ENCODE measurements at regions of chr17 and their contacts with region 1.

Region 1: DNA sequence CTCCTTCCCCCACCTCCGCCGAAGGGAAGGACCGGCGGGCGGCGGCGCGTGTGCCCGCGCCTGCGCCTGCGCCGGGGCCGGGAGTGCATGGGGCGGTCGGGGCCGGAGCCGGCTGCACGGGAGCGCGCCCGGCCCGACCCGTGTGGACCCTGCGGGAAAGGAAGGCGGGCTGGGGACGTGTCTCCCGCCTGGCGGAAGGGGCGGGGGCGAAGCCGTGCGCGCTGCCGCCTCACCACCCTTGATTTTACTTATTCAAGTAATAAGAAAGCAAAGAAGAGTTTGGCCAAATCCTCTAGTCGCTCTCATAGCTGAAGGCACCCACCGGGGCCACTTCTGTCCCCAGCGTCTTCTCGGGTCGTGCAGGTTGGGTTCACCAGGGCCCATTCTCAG is 596 bp upstream of the PFN1 start:
- DNase-seq: peak; percentile 51 to 87 (median 64)
- H3K4me3 ChIP-seq: peak overlapping the region; percentile 68 to 98 (median 91)
- H3K27ac ChIP-seq: peak overlapping the region; percentile 76 to 98 (median 96)
- H3K27me3 ChIP-seq: peaks cover 0 to 3% (median 0%) of the 10 kb centered on the region in 45 donors
- CTCF ChIP-seq: peak in 1 of 56 donors; percentile 4

Region 2: GRCh38 chr17:4891411-4892342 is 57.2 kb before region 1 on chr17:
- intact Hi-C with region 1: no loop called
- DNase-seq: no peak
- H3K4me3 ChIP-seq: no peak overlapping the region
- H3K27ac ChIP-seq: no peak overlapping the region
- H3K27me3 ChIP-seq: no peaks in the 10 kb centered on the region
- CTCF ChIP-seq: no peak

Region 3: GRCh38 chr17:4903051-4903818 is 45.7 kb before region 1 on chr17 and contains the start of gene CHRNE:
- intact Hi-C with region 1: loop called in 1 of 2 experiments (anchors 5 kb)
- DNase-seq: peak in 8 of 10 donors; percentile 60 to 90 (median 78)
- H3K4me3 ChIP-seq: peak within 1 kb of the TSS in 27 of 59 donors; percentile 1 to 64 (median 36)
- H3K27ac ChIP-seq: peak within 1 kb of the TSS in 57 of 59 donors; percentile 33 to 94 (median 77)
- H3K27me3 ChIP-seq: no peaks in the 10 kb centered on the region
- CTCF ChIP-seq: peak; percentile 65 to 89 (median 80)
- total RNA-seq, gene CHRNE: 0.34 to 4.3 (median 1.1) TPM in 119 of 120 experiments, not detected in the other

Region 4: DNA sequence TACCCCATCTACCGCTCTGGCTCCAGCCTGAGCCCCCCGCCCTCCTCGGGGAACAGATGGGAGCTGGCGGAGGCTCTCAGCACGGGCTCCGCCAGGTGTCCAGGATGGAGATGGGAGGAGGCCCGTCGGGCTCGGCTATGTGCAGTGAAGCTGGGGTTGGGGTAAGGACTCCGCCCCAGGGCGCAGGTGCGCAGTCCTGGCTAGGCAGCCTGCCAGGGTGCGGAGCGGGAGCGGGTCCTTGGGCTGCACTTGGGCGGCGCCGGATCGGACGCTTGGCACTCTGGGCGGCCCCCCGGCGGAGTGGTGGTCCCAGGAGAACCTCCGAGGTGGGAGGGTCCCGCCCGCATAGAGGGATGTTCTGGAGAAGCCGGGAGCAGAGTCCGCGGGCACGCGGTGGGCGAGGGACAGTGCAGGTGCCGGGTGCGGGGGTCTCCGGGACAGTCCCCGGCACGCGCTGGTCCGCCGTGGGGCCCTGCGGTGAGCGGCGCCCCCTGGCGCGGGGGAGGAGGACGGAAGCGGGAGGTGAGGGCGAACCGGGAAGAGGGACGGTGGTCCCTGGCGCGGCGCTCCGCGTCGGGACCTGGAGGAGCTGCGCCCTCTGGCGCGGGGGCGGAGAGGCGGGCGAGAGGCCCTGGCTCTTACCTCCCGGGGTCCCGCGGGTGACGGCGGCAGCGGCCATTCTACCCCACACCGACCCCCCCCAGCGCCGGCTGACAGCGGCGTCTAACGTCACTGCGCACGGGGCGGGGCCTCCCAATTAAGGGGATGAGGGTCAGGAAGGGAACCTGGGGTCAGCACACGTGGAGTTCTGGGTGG is 38.2 kb after region 1 on chr17 and contains the start of gene CAMTA2:
- intact Hi-C with region 1: loop called in 1 of 2 experiments (anchors 5 kb)
- DNase-seq: peak; percentile 77 to 93 (median 90)
- H3K4me3 ChIP-seq: peak within 1 kb of the TSS; percentile 64 to 100 (median 96)
- H3K27ac ChIP-seq: peak within 1 kb of the TSS; percentile 68 to 98 (median 93)
- H3K27me3 ChIP-seq: no peaks in the 10 kb centered on the region
- CTCF ChIP-seq: peak in 55 of 56 donors; percentile 41 to 82 (median 68)
- total RNA-seq, gene CAMTA2: 79.4 to 186 (median 143) TPM

Region 5: DNA sequence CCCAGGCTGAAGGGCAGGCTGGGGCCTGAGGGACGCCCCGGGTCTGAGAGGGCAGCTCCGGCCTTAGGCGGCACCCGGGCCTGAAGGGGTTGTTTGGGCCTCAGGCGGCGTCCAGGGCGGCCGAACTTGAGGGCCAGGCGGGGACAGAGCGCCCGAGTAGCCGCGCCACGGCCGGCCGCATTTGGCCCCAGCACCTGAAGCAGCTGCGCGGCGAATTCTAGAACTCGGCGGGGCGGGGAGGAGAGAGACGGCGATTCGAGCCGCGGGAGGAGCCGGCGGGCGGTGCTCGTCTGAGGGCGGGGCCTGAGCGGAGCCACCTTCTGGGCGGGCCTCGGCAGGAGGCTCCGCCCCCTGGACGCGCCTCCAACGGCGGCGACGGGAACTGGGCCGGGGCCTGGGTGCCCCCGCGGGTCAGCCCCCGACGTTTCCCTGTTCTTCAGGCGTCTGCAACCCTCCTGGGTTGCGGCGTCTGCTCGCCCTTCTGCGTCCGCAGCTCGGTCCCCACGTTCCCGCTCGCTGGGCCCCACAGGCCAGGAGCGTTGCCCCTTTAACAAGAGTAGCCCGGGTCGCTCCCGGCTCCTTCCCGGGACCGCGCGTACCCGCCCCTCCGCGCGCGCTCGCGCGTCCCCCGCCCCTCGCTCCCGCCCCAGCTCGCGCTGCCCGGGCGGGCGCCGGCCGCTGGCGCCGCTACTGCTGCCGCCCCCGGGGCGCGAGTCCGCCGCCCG is 48.5 kb after region 1 on chr17 and contains the starts of genes INCA1 and KIF1C:
- intact Hi-C with region 1: loop called in 1 of 2 experiments (anchors 1 kb)
- DNase-seq: peak; percentile 85 to 97 (median 92)
- H3K4me3 ChIP-seq: peak within 1 kb of the TSS; percentile 65 to 99 (median 93)
- H3K27ac ChIP-seq: peak within 1 kb of the TSS; percentile 81 to 99 (median 95)
- H3K27me3 ChIP-seq: no peaks in the 10 kb centered on the region
- CTCF ChIP-seq: peak in 48 of 56 donors; percentile 8 to 68 (median 41)
- total RNA-seq, gene INCA1: 0.36 to 3.7 (median 2.0) TPM in 118 of 120 experiments, not detected in the others
- total RNA-seq, gene KIF1C: 62.4 to 504 (median 132) TPM

Measured in dorsolateral prefrontal cortex (tissue), 120 donors.